Panc1 (cell line): ENCODE measurements at regions of chr3 and their contacts with region 1.

Region 1: GRCh38 chr3:173584093-173584837 is 186.7 kb downstream of the NLGN1 start:
- DNase-seq: peak; percentile 8
- ATAC-seq: no peak
- H3K4me3 ChIP-seq: peak overlapping the region; percentile 37 to 40
- H3K27ac ChIP-seq: no peak overlapping the region
- H3K4me1 ChIP-seq: peaks cover 4% of the 10 kb centered on the region; the same call in 1 of the 2 replicates
- H3K27me3 ChIP-seq: peaks cover 12% of the 10 kb centered on the region
- CTCF ChIP-seq: peak; percentile 74; the same call in 1 of the 2 replicates

Region 2: GRCh38 chr3:172808969-172809546 is 775.2 kb before region 1 on chr3:
- CTCF ChIA-PET with region 1: no interaction called
- POLR2A ChIA-PET with region 1: no interaction called
- in situ Hi-C with region 1: no loop called
- intact Hi-C with region 1: no loop called
- DNase-seq: no peak
- ATAC-seq: peak; percentile 76
- H3K4me3 ChIP-seq: no peak overlapping the region
- H3K27ac ChIP-seq: no peak overlapping the region
- H3K4me1 ChIP-seq: no peaks in the 10 kb centered on the region
- H3K27me3 ChIP-seq: no peaks in the 10 kb centered on the region
- CTCF ChIP-seq: peak; percentile 38; the same call in 1 of the 2 replicates

Region 3: GRCh38 chr3:173395412-173396181 is 188.7 kb before region 1 on chr3:
- CTCF ChIA-PET with region 1: no interaction called
- POLR2A ChIA-PET with region 1: interaction called, 14 read pairs
- in situ Hi-C with region 1: no loop called
- intact Hi-C with region 1: no loop called
- DNase-seq: no peak
- ATAC-seq: peak; percentile 89
- H3K4me3 ChIP-seq: peak overlapping the region; percentile 46 to 81
- H3K27ac ChIP-seq: no peak overlapping the region
- H3K4me1 ChIP-seq: peaks cover 17% of the 10 kb centered on the region
- H3K27me3 ChIP-seq: peaks cover 63% of the 10 kb centered on the region
- CTCF ChIP-seq: no peak

Region 4: DNA sequence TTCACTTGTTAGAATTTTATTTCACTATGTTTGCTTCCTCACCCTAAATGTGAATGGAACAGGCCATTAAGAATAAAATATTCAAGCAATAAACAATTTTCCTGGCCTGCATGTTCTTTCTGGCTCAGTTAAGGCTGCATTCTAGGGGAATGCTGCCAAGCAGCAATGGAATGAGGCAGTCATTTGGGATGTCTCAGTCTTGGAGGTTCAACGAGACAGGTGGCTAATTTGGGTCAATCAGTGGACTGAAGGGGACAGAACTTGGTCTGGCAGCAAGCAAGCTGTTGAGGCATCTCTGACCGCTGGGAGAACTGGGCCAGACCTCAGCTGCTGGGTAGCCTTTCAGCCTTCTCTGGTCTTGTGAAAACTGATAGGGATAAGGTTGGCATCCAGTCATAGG is 54.8 kb after region 1 on chr3:
- CTCF ChIA-PET with region 1: no interaction called
- POLR2A ChIA-PET with region 1: no interaction called
- in situ Hi-C with region 1: no loop called
- intact Hi-C with region 1: no loop called
- DNase-seq: no peak
- ATAC-seq: no peak
- H3K4me3 ChIP-seq: no peak overlapping the region
- H3K27ac ChIP-seq: no peak overlapping the region
- H3K4me1 ChIP-seq: no peaks in the 10 kb centered on the region
- H3K27me3 ChIP-seq: no peaks in the 10 kb centered on the region
- CTCF ChIP-seq: no peak

Region 5: GRCh38 chr3:173841334-173841733 is 257.1 kb after region 1 on chr3:
- CTCF ChIA-PET with region 1: no interaction called
- POLR2A ChIA-PET with region 1: no interaction called
- in situ Hi-C with region 1: no loop called
- intact Hi-C with region 1: no loop called
- DNase-seq: no peak
- ATAC-seq: no peak
- H3K4me3 ChIP-seq: no peak overlapping the region
- H3K27ac ChIP-seq: no peak overlapping the region
- H3K4me1 ChIP-seq: no peaks in the 10 kb centered on the region
- H3K27me3 ChIP-seq: no peaks in the 10 kb centered on the region
- CTCF ChIP-seq: no peak